ENCODE measurements at regions of chr5 and their contacts with region 1.

Region 1: DNA sequence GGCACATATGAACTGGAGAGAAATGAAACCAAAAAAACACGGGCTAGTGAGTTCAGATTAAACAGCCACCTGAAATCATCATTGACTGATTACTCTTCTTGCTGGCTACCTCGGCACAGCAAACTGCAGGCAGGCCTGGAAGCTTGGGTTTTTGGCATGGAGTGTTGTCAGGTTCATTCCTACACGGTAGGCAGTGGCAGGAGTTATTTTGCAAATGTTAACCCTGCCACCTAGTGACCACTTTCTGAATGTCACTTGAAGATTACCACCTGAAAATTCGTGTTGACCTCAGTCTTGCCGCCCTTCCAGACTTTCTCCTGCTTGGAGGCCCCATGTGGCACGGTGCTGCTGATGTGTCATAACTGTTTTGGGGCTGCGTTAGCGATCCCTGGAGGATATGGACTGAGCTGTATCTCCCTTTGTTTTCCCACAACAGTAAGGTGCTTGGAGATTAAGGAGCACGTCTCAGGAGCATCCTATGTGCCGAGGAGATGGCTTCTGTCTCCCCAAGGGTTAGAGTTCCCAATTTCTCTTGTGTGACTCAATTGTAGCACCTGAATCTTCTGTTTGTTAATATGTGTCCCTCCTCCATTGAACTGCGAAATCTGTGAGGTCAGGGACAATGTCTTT is 12.7 kb upstream of the CD180 start:
- DNase-seq: peak; percentile 85
- H3K4me3 ChIP-seq: no peak overlapping the region
- H3K27ac ChIP-seq: no peak overlapping the region
- H3K4me1 ChIP-seq: no peaks in the 10 kb centered on the region
- H3K27me3 ChIP-seq: no peaks in the 10 kb centered on the region
- CTCF ChIP-seq: peak; percentile 40 to 90 (median 86)
- POLR2A ChIP-seq: no peak

Region 2: GRCh38 chr5:66814146-66814991 is 394.9 kb before region 1 on chr5:
- intact Hi-C with region 1: loop called (anchors 5 kb)
- DNase-seq: peak; percentile 51
- H3K4me3 ChIP-seq: no peak overlapping the region
- H3K27ac ChIP-seq: no peak overlapping the region
- H3K4me1 ChIP-seq: no peaks in the 10 kb centered on the region
- H3K27me3 ChIP-seq: no peaks in the 10 kb centered on the region
- CTCF ChIP-seq: peak; percentile 36 to 76 (median 71)
- POLR2A ChIP-seq: no peak

Region 3: GRCh38 chr5:66958980-66959641 is 250.1 kb before region 1 on chr5:
- intact Hi-C with region 1: no loop called
- DNase-seq: no peak
- H3K4me3 ChIP-seq: peak overlapping the region; percentile 20 to 26
- H3K27ac ChIP-seq: peak overlapping the region; percentile 25 to 34
- H3K4me1 ChIP-seq: peaks cover 5% of the 10 kb centered on the region
- H3K27me3 ChIP-seq: no peaks in the 10 kb centered on the region
- CTCF ChIP-seq: no peak
- POLR2A ChIP-seq: no peak

Region 4: GRCh38 chr5:66987949-66988838 is 221.1 kb before region 1 on chr5:
- intact Hi-C with region 1: loop called (anchors 10 kb)
- DNase-seq: no peak
- H3K4me3 ChIP-seq: no peak overlapping the region
- H3K27ac ChIP-seq: no peak overlapping the region
- H3K4me1 ChIP-seq: no peaks in the 10 kb centered on the region
- H3K27me3 ChIP-seq: no peaks in the 10 kb centered on the region
- CTCF ChIP-seq: peak; percentile 60 to 80 (median 71)
- POLR2A ChIP-seq: no peak

Region 5: GRCh38 chr5:67156976-67157583 is 52.2 kb before region 1 on chr5:
- intact Hi-C with region 1: loop called (anchors 2 kb)
- DNase-seq: no peak
- H3K4me3 ChIP-seq: no peak overlapping the region
- H3K27ac ChIP-seq: no peak overlapping the region
- H3K4me1 ChIP-seq: peaks cover 3% of the 10 kb centered on the region
- H3K27me3 ChIP-seq: no peaks in the 10 kb centered on the region
- CTCF ChIP-seq: peak; percentile 60 to 86 (median 71)
- POLR2A ChIP-seq: no peak

Region 6: GRCh38 chr5:67165526-67166459 is 43.5 kb before region 1 on chr5:
- intact Hi-C with region 1: loop called (anchors 2 kb)
- DNase-seq: peak; percentile 78
- H3K4me3 ChIP-seq: peak overlapping the region; percentile 5 to 7
- H3K27ac ChIP-seq: peak overlapping the region; percentile 30 to 72
- H3K4me1 ChIP-seq: peaks cover 3% of the 10 kb centered on the region
- H3K27me3 ChIP-seq: no peaks in the 10 kb centered on the region
- CTCF ChIP-seq: peak; percentile 57 to 87 (median 75)
- POLR2A ChIP-seq: no peak